ENCODE measurements at regions of chr5 and their contacts with region 1.

Region 1: GRCh38 chr5:131109540-131110255 is 55.4 kb downstream of the HINT1 start:
- DNase-seq: no peak
- ATAC-seq: peak; percentile 64
- H3K4me3 Mint-ChIP-seq: no peak overlapping the region
- H3K27ac Mint-ChIP-seq: no peak overlapping the region
- H3K4me1 Mint-ChIP-seq: no peaks in the 10 kb centered on the region
- H3K27me3 Mint-ChIP-seq: peaks cover 2% of the 10 kb centered on the region
- CTCF ChIP-seq: peak; percentile 43

Region 2: DNA sequence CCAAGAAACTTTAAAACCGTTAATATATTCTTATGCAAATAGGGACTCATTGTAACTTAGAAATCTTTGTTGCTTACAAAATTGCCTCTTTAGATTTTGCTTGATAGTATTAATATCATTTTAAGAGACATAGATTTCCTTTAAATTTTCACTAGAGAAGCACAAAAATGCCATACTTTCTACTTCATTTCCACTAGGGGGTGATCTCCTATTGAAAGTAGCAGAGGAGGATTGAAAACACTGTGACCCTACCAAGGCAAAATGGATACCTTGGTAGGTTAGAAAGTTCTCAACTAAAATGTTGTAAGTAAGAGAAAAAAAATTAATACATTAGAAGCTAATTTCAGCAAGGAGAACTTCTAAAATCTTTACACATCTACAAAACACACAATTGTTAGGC is 1000.5 kb before region 1 on chr5:
- CTCF ChIA-PET with region 1: no interaction called
- POLR2A ChIA-PET with region 1: no interaction called
- intact Hi-C with region 1: loop called (anchors 1 kb)
- DNase-seq: no peak
- ATAC-seq: no peak
- H3K4me3 Mint-ChIP-seq: no peak overlapping the region
- H3K27ac Mint-ChIP-seq: no peak overlapping the region
- H3K4me1 Mint-ChIP-seq: no peaks in the 10 kb centered on the region
- H3K27me3 Mint-ChIP-seq: no peaks in the 10 kb centered on the region
- CTCF ChIP-seq: no peak

Region 3: GRCh38 chr5:130198925-130199324 is 910.8 kb before region 1 on chr5:
- CTCF ChIA-PET with region 1: no interaction called
- POLR2A ChIA-PET with region 1: no interaction called
- intact Hi-C with region 1: loop called (anchors 10 kb)
- DNase-seq: no peak
- ATAC-seq: no peak
- H3K4me3 Mint-ChIP-seq: no peak overlapping the region
- H3K27ac Mint-ChIP-seq: no peak overlapping the region
- H3K4me1 Mint-ChIP-seq: no peaks in the 10 kb centered on the region
- H3K27me3 Mint-ChIP-seq: no peaks in the 10 kb centered on the region
- CTCF ChIP-seq: no peak

Region 4: GRCh38 chr5:130871346-130872086 is 238.2 kb before region 1 on chr5:
- CTCF ChIA-PET with region 1: interaction called, 22 read pairs
- POLR2A ChIA-PET with region 1: no interaction called
- intact Hi-C with region 1: loop called (anchors 1 kb)
- DNase-seq: no peak
- ATAC-seq: peak; percentile 56
- H3K4me3 Mint-ChIP-seq: no peak overlapping the region
- H3K27ac Mint-ChIP-seq: no peak overlapping the region
- H3K4me1 Mint-ChIP-seq: no peaks in the 10 kb centered on the region
- H3K27me3 Mint-ChIP-seq: peaks cover under 1% of the 10 kb centered on the region
- CTCF ChIP-seq: no peak

Measured in activated B cell treated with CpG ODN at 0.5 μM for 24 hours (primary cell).